Mammary epithelial cell (primary cell): ENCODE measurements at regions of chr16 and their contacts with region 1.

Region 1: GRCh38 chr16:24906199-24907020 is 60.6 kb downstream of the SLC5A11 start:
- DNase-seq: no peak
- H3K4me3 ChIP-seq: no peak overlapping the region
- H3K27ac ChIP-seq: no peak overlapping the region
- H3K4me1 ChIP-seq: no peaks in the 10 kb centered on the region
- H3K27me3 ChIP-seq: peaks cover 2% of the 10 kb centered on the region
- CTCF ChIP-seq: peak; percentile 28 to 50

Region 2: DNA sequence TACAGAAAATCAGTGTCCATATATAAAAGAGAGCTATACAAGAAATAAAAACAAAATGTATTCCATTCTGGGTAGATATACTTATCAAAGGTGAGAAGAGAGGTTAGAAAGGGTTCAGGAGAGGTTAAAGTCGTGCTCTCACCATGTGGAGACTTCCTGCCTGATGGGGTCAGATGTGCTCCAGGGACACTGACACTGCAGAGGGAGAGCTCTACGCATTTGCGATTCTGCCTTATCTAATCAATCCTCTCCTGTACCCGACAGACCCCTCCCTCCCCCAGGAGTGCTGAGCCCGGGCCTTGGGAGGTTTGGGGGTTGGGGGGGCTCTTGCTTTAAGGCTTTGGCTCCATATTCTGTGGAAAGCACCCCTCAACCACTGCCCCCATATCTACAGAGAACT is 77.3 kb before region 1 on chr16:
- CTCF ChIA-PET with region 1: no interaction called
- dilution Hi-C with region 1: loop called (anchors 5 kb)
- in situ Hi-C with region 1: no loop called
- intact Hi-C with region 1: no loop called
- DNase-seq: no peak
- H3K4me3 ChIP-seq: no peak overlapping the region
- H3K27ac ChIP-seq: no peak overlapping the region
- H3K4me1 ChIP-seq: peaks cover 6% of the 10 kb centered on the region
- H3K27me3 ChIP-seq: no peaks in the 10 kb centered on the region
- CTCF ChIP-seq: no peak

Region 3: GRCh38 chr16:24858219-24859041 is 48.0 kb before region 1 on chr16:
- CTCF ChIA-PET with region 1: no interaction called
- dilution Hi-C with region 1: no loop called
- in situ Hi-C with region 1: no loop called
- intact Hi-C with region 1: loop called (anchors 10 kb)
- DNase-seq: peak; percentile 46
- H3K4me3 ChIP-seq: no peak overlapping the region
- H3K27ac ChIP-seq: no peak overlapping the region
- H3K4me1 ChIP-seq: no peaks in the 10 kb centered on the region
- H3K27me3 ChIP-seq: no peaks in the 10 kb centered on the region
- CTCF ChIP-seq: no peak

Region 4: GRCh38 chr16:24876231-24876630 is 30.2 kb before region 1 on chr16:
- CTCF ChIA-PET with region 1: no interaction called
- dilution Hi-C with region 1: loop called (anchors 5 kb)
- in situ Hi-C with region 1: no loop called
- intact Hi-C with region 1: no loop called
- DNase-seq: no peak
- H3K4me3 ChIP-seq: no peak overlapping the region
- H3K27ac ChIP-seq: no peak overlapping the region
- H3K4me1 ChIP-seq: no peaks in the 10 kb centered on the region
- H3K27me3 ChIP-seq: no peaks in the 10 kb centered on the region
- CTCF ChIP-seq: no peak

Region 5: DNA sequence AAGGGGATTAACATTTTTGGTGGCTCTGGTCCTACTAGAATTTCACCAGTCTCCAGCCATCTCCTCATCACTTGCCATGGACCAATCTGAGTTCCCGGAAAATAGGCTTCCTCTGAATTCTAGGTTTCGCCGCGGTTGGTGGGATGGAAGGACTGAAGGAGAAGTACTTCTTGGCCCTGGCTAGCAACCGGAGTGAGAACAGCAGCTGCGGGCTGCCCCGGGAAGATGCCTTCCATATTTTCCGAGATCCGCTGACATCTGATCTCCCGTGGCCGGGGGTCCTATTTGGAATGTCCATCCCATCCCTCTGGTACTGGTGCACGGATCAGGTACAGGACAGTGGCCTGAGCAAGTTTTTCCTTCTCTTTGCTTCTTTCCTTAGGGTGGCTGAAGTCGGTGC is 15.7 kb before region 1 on chr16:
- CTCF ChIA-PET with region 1: no interaction called
- dilution Hi-C with region 1: no loop called
- in situ Hi-C with region 1: no loop called
- intact Hi-C with region 1: no loop called
- DNase-seq: no peak
- H3K4me3 ChIP-seq: no peak overlapping the region
- H3K27ac ChIP-seq: no peak overlapping the region
- H3K4me1 ChIP-seq: no peaks in the 10 kb centered on the region
- H3K27me3 ChIP-seq: peaks cover 3% of the 10 kb centered on the region
- CTCF ChIP-seq: no peak

Region 6: GRCh38 chr16:24921229-24921628 is 14.8 kb after region 1 on chr16:
- CTCF ChIA-PET with region 1: interaction called, 15 read pairs
- dilution Hi-C with region 1: no loop called
- in situ Hi-C with region 1: no loop called
- intact Hi-C with region 1: no loop called
- DNase-seq: no peak
- H3K4me3 ChIP-seq: no peak overlapping the region
- H3K27ac ChIP-seq: no peak overlapping the region
- H3K4me1 ChIP-seq: no peaks in the 10 kb centered on the region
- H3K27me3 ChIP-seq: no peaks in the 10 kb centered on the region
- CTCF ChIP-seq: no peak

Region 7: DNA sequence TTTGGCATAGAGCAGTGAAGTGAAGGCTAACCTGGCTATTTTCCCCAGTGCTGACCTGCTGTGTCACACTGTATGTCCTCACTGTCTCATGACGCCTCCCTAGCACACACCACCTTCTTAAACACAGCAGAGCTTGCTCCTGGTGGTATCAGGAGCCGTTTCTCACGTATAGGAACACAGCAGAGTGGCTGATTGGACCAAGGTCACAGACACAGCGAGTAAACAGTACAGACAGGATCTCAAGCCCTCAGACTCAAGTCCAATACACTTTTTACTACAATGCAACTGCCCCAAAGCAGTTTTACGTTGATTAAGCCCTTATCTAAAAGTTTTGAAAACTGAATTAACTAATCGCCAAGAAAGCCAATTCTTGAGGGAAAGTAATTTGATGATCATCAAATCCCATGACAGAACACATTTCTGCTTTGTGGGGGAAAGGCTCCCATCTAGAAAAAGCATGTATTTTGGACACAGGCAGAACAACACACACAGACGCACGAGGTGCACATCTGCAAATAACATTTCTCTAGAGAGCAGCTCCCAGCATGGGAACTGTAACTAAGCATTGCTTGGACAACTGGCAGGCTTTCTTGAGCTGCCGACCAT is 93.5 kb after region 1 on chr16:
- CTCF ChIA-PET with region 1: no interaction called
- dilution Hi-C with region 1: no loop called
- in situ Hi-C with region 1: no loop called
- intact Hi-C with region 1: no loop called
- DNase-seq: no peak
- H3K4me3 ChIP-seq: no peak overlapping the region
- H3K27ac ChIP-seq: no peak overlapping the region
- H3K4me1 ChIP-seq: peaks cover 17% of the 10 kb centered on the region
- H3K27me3 ChIP-seq: no peaks in the 10 kb centered on the region
- CTCF ChIP-seq: no peak

Region 8: GRCh38 chr16:25014500-25015147 is 108.2 kb after region 1 on chr16:
- CTCF ChIA-PET with region 1: no interaction called
- dilution Hi-C with region 1: loop called (anchors 5 kb)
- in situ Hi-C with region 1: no loop called
- intact Hi-C with region 1: no loop called
- DNase-seq: peak; percentile 52
- H3K4me3 ChIP-seq: peak overlapping the region; percentile 93 to 99 (median 96)
- H3K27ac ChIP-seq: peak overlapping the region; percentile 69
- H3K4me1 ChIP-seq: peaks cover 26% of the 10 kb centered on the region
- H3K27me3 ChIP-seq: no peaks in the 10 kb centered on the region
- CTCF ChIP-seq: peak in 1 of 2 donors; percentile 2